Activated CD4-positive, alpha-beta T cell treated with anti-CD3 and anti-CD28 coated beads, Interleukin-2, amount 10 ng/mL, durations not matched to agents 24 days and 14 days (primary cell): ENCODE measurements at regions of chr12 and their contacts with region 1.

Region 1: DNA sequence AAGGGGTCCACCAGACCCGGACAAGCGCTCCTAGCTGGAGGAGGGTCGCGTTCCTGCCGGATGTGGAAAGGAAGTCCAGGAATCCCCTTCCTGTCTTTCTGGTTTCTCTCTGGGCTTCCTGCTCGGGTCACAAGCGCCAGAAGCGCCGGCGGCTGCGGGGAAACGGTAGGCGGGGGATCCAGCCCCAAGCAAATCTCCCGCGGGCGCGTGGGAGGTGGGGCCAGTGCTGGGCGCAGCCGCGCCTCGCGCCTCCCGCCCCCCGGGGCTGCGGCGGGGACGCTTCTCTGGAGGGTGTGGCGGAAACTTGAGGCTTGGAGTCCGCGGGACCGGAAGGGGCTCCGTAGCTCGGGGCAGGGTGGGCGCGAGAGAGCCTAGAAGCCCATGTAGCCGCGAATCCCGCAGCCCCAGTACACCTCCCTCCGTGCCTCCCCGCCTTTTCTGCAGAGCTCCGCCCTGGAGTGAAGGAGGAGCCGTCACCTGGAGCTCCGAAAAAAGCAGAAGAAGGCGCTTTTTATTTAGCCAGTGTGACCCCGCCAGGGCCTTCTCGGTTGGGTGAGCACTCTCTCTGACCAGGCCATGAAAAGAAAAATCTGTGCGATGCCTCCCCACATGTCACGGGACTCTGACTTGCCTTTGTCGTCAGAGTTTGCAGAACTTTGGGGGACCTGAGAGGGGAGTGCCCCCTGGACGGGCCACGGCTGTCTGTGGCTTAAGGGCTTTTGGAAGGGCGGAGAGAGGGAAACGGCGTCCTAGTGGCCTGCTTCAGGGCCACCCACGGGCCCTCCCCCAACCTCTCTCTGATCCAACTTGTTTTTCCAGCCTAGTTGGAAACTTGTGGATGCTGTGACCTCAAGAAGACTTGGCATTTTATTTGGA is 21.4 kb upstream of the CLEC2D start:
- DNase-seq: peak; percentile 98
- H3K4me3 Mint-ChIP-seq: peak overlapping the region; percentile 95
- H3K27ac Mint-ChIP-seq: peak overlapping the region; percentile 97
- H3K4me1 Mint-ChIP-seq: peaks cover 57% of the 10 kb centered on the region
- H3K27me3 Mint-ChIP-seq: peaks cover 3% of the 10 kb centered on the region

Region 2: GRCh38 chr12:9364224-9365176 is 283.6 kb before region 1 on chr12:
- intact Hi-C with region 1: loop called (anchors 2 kb)
- DNase-seq: peak; percentile 81
- H3K4me3 Mint-ChIP-seq: peak overlapping the region; percentile 66
- H3K27ac Mint-ChIP-seq: peak overlapping the region; percentile 88
- H3K4me1 Mint-ChIP-seq: peaks cover 40% of the 10 kb centered on the region
- H3K27me3 Mint-ChIP-seq: peaks cover 33% of the 10 kb centered on the region

Region 3: GRCh38 chr12:9673404-9674225 is 25.6 kb after region 1 on chr12:
- intact Hi-C with region 1: loop called (anchors 1 kb)
- DNase-seq: peak; percentile 86
- H3K4me3 Mint-ChIP-seq: peak overlapping the region; percentile 89
- H3K27ac Mint-ChIP-seq: peak overlapping the region; percentile 97
- H3K4me1 Mint-ChIP-seq: peaks cover 58% of the 10 kb centered on the region
- H3K27me3 Mint-ChIP-seq: no peaks in the 10 kb centered on the region

Region 4: GRCh38 chr12:9702255-9702654 is 54.2 kb after region 1 on chr12:
- intact Hi-C with region 1: loop called (anchors 2 kb)
- DNase-seq: peak; percentile 87
- H3K4me3 Mint-ChIP-seq: peak overlapping the region; percentile 68
- H3K27ac Mint-ChIP-seq: peak overlapping the region; percentile 83
- H3K4me1 Mint-ChIP-seq: peaks cover 69% of the 10 kb centered on the region
- H3K27me3 Mint-ChIP-seq: no peaks in the 10 kb centered on the region

Region 5: GRCh38 chr12:9760699-9761418 is 112.8 kb after region 1 on chr12 and contains the start of gene CD69:
- intact Hi-C with region 1: loop called (anchors 1 kb)
- DNase-seq: peak; percentile 96
- H3K4me3 Mint-ChIP-seq: peak within 1 kb of the TSS; percentile 94
- H3K27ac Mint-ChIP-seq: peak within 1 kb of the TSS; percentile 98
- H3K4me1 Mint-ChIP-seq: peaks cover 48% of the 10 kb centered on the region
- H3K27me3 Mint-ChIP-seq: peaks cover 5% of the 10 kb centered on the region
- total RNA-seq, gene CD69: 106 and 111 TPM in 2 replicates